ENCODE measurements at regions of chr1 and their contacts with region 1.

Region 1: GRCh38 chr1:224329842-224330753 is at the start of gene NVL:
- DNase-seq: peak; percentile 89
- H3K4me3 ChIP-seq: peak within 1 kb of the TSS; percentile 63 to 85 (median 73)
- H3K27ac ChIP-seq: peak within 1 kb of the TSS; percentile 87 to 92 (median 91)
- H3K4me1 ChIP-seq: peaks cover 12 to 42% (median 24%) of the 10 kb centered on the region in 4 donors
- H3K27me3 ChIP-seq: no peaks in the 10 kb centered on the region
- CTCF ChIP-seq: no peak
- EP300 ChIP-seq: no peak
- POLR2A ChIP-seq: peak; percentile 70
- total RNA-seq, gene NVL: 35.9 to 52.3 (median 40.5) TPM

Region 2: DNA sequence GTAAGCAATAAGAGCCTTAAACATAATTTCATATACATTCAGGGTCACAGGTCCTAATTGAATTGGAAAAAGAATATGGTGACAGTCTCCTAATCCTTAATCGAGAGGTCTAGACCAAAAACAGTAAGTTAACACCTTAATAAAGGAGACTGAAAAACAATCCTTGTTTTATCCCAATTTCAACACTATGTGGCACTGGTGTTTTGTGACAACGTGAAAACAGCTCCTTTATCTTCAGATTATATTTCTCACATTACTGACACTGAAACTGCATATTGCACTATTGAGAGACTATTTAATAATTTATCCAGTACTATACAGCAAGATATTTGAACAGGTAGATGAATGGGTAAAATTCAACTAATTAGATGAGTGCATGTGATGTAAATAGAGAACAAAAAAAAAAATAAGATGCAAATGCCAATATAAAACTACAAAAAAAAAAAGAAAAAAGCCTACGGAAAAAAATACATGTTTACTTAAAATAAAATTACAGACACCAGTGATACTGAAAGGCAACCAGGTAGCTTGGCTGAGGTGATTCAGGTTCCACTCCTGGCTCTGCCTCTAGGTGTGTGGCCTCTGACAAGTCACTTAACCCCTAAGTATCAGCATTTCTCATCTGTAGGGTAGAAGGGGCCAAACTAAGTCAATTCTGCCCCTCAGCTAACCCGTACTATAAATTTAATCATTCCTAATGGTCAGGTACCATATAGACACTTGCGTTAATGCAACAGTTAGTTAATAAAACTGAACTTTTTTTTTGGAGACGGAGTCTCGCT is 518.3 kb before region 1 on chr1:
- in situ Hi-C with region 1: loop called in 1 of 4 experiments (anchors 25 kb)
- intact Hi-C with region 1: no loop called
- DNase-seq: no peak
- H3K4me3 ChIP-seq: no peak overlapping the region
- H3K27ac ChIP-seq: no peak overlapping the region
- H3K4me1 ChIP-seq: no peaks in the 10 kb centered on the region
- H3K27me3 ChIP-seq: no peaks in the 10 kb centered on the region
- CTCF ChIP-seq: peak; percentile 38 to 46 (median 41)
- EP300 ChIP-seq: no peak
- POLR2A ChIP-seq: no peak

Region 3: GRCh38 chr1:224113918-224114786 is 215.9 kb before region 1 on chr1 and contains the start of gene FBXO28:
- in situ Hi-C with region 1: loop called in 2 of 4 experiments (anchors 10 kb)
- intact Hi-C with region 1: loop called (anchors 5 kb)
- DNase-seq: peak; percentile 95
- H3K4me3 ChIP-seq: peak within 1 kb of the TSS; percentile 81 to 99 (median 83)
- H3K27ac ChIP-seq: peak within 1 kb of the TSS; percentile 92 to 96 (median 94)
- H3K4me1 ChIP-seq: peaks cover 12 to 27% (median 20%) of the 10 kb centered on the region in 4 donors
- H3K27me3 ChIP-seq: peaks cover 3% of the 10 kb centered on the region
- CTCF ChIP-seq: no peak
- EP300 ChIP-seq: no peak
- POLR2A ChIP-seq: peak; percentile 89
- total RNA-seq, gene FBXO28: 7.0 to 31.0 (median 26.4) TPM

Region 4: GRCh38 chr1:224127925-224128819 is 201.9 kb before region 1 on chr1:
- in situ Hi-C with region 1: loop called in 1 of 4 experiments (anchors 5 kb)
- intact Hi-C with region 1: no loop called
- DNase-seq: no peak
- H3K4me3 ChIP-seq: no peak overlapping the region
- H3K27ac ChIP-seq: no peak overlapping the region
- H3K4me1 ChIP-seq: no peaks in the 10 kb centered on the region
- H3K27me3 ChIP-seq: no peaks in the 10 kb centered on the region
- CTCF ChIP-seq: no peak
- EP300 ChIP-seq: no peak
- POLR2A ChIP-seq: no peak

Region 5: GRCh38 chr1:224182866-224183590 is 147.1 kb before region 1 on chr1 and contains the start of gene DEGS1:
- in situ Hi-C with region 1: no loop called
- intact Hi-C with region 1: loop called (anchors 10 kb)
- DNase-seq: peak; percentile 85
- H3K4me3 ChIP-seq: peak within 1 kb of the TSS; percentile 67 to 86 (median 80)
- H3K27ac ChIP-seq: peak within 1 kb of the TSS; percentile 89 to 98 (median 94)
- H3K4me1 ChIP-seq: peaks cover 6 to 37% (median 18%) of the 10 kb centered on the region in 4 donors
- H3K27me3 ChIP-seq: no peaks in the 10 kb centered on the region
- CTCF ChIP-seq: no peak
- EP300 ChIP-seq: no peak
- POLR2A ChIP-seq: peak; percentile 79
- total RNA-seq, gene DEGS1: 19.1 to 32.9 (median 22.6) TPM

Measured in transverse colon (tissue), 4 donors.